ENCODE measurements at regions of chr3 and their contacts with region 1.

Region 1: DNA sequence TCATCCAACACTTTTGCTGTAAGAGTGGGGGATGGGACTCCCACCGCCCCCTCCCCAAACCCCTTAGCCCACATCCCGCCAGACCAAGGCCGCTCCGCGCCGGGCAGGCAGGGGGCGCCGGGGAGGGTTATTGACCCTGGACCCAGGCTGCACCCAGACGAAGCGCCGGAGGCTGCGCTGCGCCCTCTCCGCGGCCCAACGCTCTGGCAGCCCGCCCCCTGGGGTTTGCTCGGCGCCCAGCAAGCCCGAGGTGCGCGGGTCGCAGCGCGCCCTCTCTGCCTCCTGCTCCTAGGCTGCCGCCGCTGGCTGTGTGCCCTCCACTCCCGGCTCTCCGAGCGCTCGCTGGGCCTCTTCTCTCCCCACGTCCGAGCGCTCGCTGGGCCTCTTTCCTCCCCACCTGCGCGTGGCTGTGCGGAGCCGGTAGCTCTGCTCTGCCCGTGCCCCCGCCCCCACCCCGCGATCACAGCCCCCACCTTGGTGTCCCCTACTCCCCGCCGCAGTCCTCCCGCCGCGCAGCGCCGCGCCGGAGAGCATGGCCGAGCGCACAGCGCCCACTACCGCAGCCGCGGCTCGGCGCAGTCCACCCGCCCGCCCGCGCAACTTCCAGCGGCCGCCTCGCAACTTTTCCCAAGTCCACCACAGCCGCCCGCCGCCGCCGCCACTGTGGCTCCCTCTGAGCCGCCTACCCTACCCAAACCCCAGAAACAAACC is 1.2 kb downstream of the MECOM start:
- DNase-seq: peak; percentile 69
- ATAC-seq: peak; percentile 60
- H3K4me3 ChIP-seq: peak overlapping the region; percentile 34 to 70 (median 56)
- H3K4me3 Mint-ChIP-seq: peak overlapping the region; percentile 85
- H3K27ac ChIP-seq: no peak overlapping the region
- H3K27ac Mint-ChIP-seq: no peak overlapping the region
- H3K4me1 ChIP-seq: peaks cover 61 to 78% of the 10 kb centered on the region in 2 donors
- H3K4me1 Mint-ChIP-seq: peaks cover 54% of the 10 kb centered on the region
- H3K27me3 ChIP-seq: peaks cover 0 to 93% (median 84%) of the 10 kb centered on the region in 4 experiments
- H3K27me3 Mint-ChIP-seq: peaks cover 76% of the 10 kb centered on the region
- CTCF ChIP-seq: peak; percentile 59

Region 2: DNA sequence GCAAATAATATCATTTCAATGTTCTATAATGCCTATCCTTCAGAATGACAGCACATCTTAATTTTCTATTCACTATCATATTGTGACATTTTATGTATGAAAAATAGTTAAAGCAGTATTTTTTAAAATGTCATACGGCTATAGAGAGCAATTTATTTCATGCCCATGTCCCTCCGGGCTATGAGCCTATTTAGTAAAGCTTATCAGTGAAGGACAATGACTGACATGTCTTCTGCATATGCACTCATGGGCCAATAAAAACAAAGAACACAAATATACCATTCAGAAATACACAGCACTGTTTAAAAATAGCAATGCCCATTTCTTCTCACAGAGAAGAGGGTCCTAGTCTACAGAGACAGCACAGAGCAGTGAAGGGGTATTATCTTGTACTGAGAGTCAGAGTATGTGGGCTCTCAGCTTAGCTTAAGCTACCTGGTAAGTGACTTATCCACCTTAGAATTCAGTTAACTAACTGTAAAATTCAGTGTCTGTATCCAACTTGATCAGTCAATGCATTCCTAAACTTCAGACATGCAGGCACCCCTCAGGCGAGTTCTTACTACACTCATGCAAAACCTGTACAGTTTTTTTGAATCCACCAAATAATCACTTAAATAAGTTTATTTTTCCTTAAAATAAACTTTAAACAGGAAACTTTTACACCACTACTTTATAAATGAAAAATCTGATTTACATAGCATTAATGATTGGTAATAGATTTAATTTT is 1575.6 kb before region 1 on chr3:
- CTCF ChIA-PET with region 1: no interaction called
- POLR2A ChIA-PET with region 1: interaction called, 11 read pairs
- intact Hi-C with region 1: no loop called
- DNase-seq: no peak
- ATAC-seq: no peak
- H3K4me3 ChIP-seq: no peak overlapping the region
- H3K4me3 Mint-ChIP-seq: no peak overlapping the region
- H3K27ac ChIP-seq: no peak overlapping the region
- H3K27ac Mint-ChIP-seq: no peak overlapping the region
- H3K4me1 ChIP-seq: no peaks in the 10 kb centered on the region
- H3K4me1 Mint-ChIP-seq: peaks cover 5% of the 10 kb centered on the region
- H3K27me3 ChIP-seq: no peaks in the 10 kb centered on the region
- H3K27me3 Mint-ChIP-seq: no peaks in the 10 kb centered on the region
- CTCF ChIP-seq: no peak

Region 3: DNA sequence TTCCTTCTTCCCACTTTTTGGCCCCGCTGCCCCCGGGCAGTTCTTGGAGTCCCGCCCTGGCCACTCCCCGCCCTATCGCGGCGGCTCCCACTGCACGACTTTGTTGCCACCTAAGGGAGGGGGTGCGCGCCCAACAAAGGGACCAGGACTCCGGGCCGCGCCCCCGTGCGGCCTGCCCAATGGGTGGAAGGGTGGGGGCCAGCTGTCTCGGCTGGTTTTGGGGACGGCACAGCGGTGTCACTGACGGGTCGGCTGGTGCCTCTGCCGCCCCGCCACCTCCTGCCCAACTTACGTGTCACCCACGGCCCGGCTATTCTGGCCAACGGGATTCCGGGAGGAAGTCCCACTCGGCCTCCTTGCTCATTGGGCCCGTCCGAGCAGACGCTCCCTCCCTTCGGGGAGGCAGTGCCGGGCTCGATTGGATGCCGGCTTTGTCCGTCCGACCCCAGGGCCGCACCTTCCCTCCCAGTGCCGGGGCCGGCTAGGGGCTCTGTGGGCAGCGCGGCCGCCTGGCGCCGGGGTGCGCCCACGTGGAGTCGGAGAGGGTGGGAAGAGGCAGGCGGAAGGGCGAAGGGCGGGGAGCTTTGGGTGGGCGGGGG is 1566.6 kb before region 1 on chr3 and contains the start of gene GOLIM4:
- CTCF ChIA-PET with region 1: no interaction called
- POLR2A ChIA-PET with region 1: no interaction called
- intact Hi-C with region 1: loop called (anchors 5 kb)
- DNase-seq: peak; percentile 90
- ATAC-seq: peak; percentile 77
- H3K4me3 ChIP-seq: peak within 1 kb of the TSS; percentile 56 to 82 (median 73)
- H3K4me3 Mint-ChIP-seq: peak within 1 kb of the TSS; percentile 100
- H3K27ac ChIP-seq: peak within 1 kb of the TSS; percentile 38 to 76
- H3K27ac Mint-ChIP-seq: peak within 1 kb of the TSS; percentile 97
- H3K4me1 ChIP-seq: peaks cover 9 to 11% of the 10 kb centered on the region in 2 donors
- H3K4me1 Mint-ChIP-seq: peaks cover 20% of the 10 kb centered on the region
- H3K27me3 ChIP-seq: no peaks in the 10 kb centered on the region
- H3K27me3 Mint-ChIP-seq: no peaks in the 10 kb centered on the region
- CTCF ChIP-seq: no peak
- total RNA-seq, gene GOLIM4: 9.3 and 10.5 TPM in 2 replicates

Region 4: GRCh38 chr3:169564883-169565282 is 97.4 kb before region 1 on chr3:
- CTCF ChIA-PET with region 1: interaction called, 4 read pairs
- POLR2A ChIA-PET with region 1: no interaction called
- intact Hi-C with region 1: loop called (anchors 5 kb)
- DNase-seq: no peak
- ATAC-seq: no peak
- H3K4me3 ChIP-seq: no peak overlapping the region
- H3K4me3 Mint-ChIP-seq: no peak overlapping the region
- H3K27ac ChIP-seq: no peak overlapping the region
- H3K27ac Mint-ChIP-seq: no peak overlapping the region
- H3K4me1 ChIP-seq: no peaks in the 10 kb centered on the region
- H3K4me1 Mint-ChIP-seq: peaks cover 1% of the 10 kb centered on the region
- H3K27me3 ChIP-seq: no peaks in the 10 kb centered on the region
- H3K27me3 Mint-ChIP-seq: no peaks in the 10 kb centered on the region
- CTCF ChIP-seq: no peak

Region 5: DNA sequence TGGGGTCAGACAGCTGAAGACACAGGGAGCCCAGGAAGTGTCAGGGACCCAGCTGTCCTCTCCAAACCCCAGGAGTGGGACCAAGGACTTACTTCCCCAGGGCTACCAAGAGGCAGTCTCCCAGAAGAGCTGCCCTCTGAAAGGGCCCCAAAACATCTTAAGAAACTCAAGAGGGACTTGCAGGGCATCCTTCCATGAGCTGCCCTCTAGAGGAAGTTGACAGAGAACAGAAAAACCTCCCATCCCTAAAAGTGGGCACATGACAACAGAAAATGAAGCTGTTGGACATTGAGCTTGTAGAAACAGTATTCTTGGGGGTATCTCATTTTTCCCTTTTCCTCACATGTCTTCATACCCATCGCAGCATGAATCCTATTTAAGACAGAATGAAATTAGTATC is 57.7 kb before region 1 on chr3:
- CTCF ChIA-PET with region 1: no interaction called
- POLR2A ChIA-PET with region 1: no interaction called
- intact Hi-C with region 1: loop called (anchors 5 kb)
- DNase-seq: peak; percentile 3
- ATAC-seq: no peak
- H3K4me3 ChIP-seq: no peak overlapping the region
- H3K4me3 Mint-ChIP-seq: no peak overlapping the region
- H3K27ac ChIP-seq: no peak overlapping the region
- H3K27ac Mint-ChIP-seq: no peak overlapping the region
- H3K4me1 ChIP-seq: peaks cover 6 to 13% of the 10 kb centered on the region in 2 donors
- H3K4me1 Mint-ChIP-seq: peaks cover 27% of the 10 kb centered on the region
- H3K27me3 ChIP-seq: no peaks in the 10 kb centered on the region
- H3K27me3 Mint-ChIP-seq: peaks cover 3% of the 10 kb centered on the region
- CTCF ChIP-seq: no peak

Region 6: GRCh38 chr3:169955406-169955805 is 293.1 kb after region 1 on chr3:
- CTCF ChIA-PET with region 1: no interaction called
- POLR2A ChIA-PET with region 1: no interaction called
- intact Hi-C with region 1: no loop called
- DNase-seq: no peak
- ATAC-seq: no peak
- H3K4me3 ChIP-seq: no peak overlapping the region
- H3K4me3 Mint-ChIP-seq: peak overlapping the region; percentile 59
- H3K27ac ChIP-seq: peak overlapping the region in 1 of 2 donors; percentile 89
- H3K27ac Mint-ChIP-seq: peak overlapping the region; percentile 63
- H3K4me1 ChIP-seq: peaks cover 36 to 38% of the 10 kb centered on the region in 2 donors
- H3K4me1 Mint-ChIP-seq: peaks cover 51% of the 10 kb centered on the region
- H3K27me3 ChIP-seq: no peaks in the 10 kb centered on the region
- H3K27me3 Mint-ChIP-seq: no peaks in the 10 kb centered on the region
- CTCF ChIP-seq: no peak

Measured in B cell (primary cell).